Sciatic nerve (tissue), 2 donors: ENCODE measurements at regions of chr1 and their contacts with region 1.

Region 1: DNA sequence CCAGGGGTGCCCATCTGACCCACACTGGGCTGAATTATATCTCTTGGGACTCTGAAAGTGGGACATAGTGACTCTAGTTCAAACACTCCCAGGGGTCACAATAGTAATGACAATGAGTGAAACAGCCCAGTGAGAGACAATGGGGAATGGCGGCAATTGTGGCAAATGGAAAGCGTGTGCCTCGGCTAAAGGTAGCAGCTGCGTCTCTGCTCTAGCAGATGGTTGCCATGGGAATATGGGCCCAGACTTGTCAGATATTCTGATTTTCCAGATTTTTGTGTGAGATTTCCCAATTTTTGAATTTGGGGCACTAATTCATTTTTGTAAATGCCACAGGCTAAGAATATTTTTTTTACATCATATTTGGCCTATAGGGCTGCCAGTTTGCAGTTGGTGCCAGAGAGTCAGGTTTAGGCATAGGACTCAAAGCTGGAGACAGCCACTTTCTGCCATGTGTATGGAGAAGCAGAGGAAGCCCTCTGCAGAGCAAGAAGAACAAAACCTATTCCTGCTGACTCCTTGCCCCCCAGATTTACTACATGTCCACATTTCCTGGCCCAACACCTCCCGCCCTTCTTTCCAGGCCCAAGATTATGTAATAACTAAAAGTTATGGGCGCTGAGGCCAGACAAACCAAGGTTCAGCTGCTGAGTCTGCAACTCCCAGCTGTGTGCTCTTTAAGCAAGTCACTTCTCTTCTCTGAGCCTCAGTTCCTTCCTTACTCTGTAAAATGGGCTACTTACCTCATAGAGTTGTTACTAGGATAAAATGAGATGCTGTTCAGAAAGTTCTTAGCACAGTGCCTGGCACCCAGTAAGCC is 21.6 kb upstream of the PTP4A2 start:
- DNase-seq: no peak
- ATAC-seq: no peak

Region 2: DNA sequence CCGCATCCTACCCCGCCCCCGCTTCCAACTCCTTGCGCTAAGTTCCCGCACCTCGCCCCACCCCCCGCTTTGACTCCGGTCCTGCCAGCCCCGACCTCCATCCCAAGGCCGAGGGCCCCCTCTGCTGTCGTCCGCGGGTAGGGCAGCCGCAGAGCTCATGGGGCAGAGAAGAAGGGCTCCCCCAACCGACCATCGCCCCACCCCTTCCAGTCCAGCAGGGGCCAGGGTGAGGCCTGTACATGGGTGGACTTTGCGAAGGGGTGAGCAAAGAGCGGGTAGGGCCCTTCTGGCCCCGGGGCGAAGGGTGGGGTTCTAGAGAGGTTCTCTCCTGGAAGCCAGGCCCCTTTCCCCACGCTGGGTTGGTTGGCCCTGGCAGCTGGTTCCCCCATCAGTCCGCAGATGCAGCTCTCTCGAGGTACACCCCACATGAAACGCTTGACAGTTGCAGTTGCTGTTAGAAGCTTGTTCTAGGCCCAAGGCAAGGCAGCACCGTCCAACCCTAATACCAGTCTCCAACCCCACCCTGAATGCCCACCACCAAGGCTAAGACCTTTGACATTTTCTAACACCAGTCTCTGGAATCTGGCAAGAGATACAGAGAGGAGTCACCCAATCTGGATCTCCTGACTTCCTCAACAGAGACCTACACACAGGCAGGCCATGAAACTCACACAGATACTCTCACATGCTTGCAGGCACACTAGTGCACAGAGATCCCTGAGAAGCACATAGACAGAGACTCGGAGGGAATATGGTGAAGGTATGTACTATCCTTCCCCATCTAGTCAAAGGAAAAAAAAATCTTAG is 170.3 kb before region 1 on chr1:
- intact Hi-C with region 1: loop called (anchors 10 kb)
- DNase-seq: peak; percentile 99
- ATAC-seq: peak; percentile 92

Region 3: DNA sequence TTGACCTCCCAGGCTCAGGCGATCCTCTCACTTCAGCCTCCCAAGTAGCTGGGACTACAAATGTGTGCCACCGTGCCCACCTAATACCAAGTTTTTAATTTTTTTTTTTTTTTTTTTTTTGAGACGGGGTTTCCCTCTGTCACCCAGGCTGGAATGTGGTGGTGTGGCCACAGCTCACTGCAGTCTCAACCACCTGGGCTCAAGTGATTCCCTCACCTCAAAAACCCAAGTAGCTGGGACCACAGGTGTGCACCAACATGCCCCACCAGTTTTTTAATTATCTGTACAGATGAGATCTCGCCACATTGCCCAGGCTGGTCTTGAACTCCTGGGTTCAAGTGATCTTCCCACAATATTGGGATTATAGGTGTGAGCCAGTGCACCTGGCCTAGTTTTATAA is 44.3 kb before region 1 on chr1:
- intact Hi-C with region 1: loop called (anchors 2 kb)
- DNase-seq: no peak
- ATAC-seq: no peak

Region 4: GRCh38 chr1:32335790-32336590 is 376.3 kb after region 1 on chr1 and contains the start of gene MARCKSL1:
- intact Hi-C with region 1: no loop called
- DNase-seq: peak; percentile 93
- ATAC-seq: peak; percentile 83
- total RNA-seq, gene MARCKSL1: 126 TPM